IMR-90 (cell line): ENCODE measurements at regions of chr1 and their contacts with region 1.

Region 1: GRCh38 chr1:219973213-219973612 is 44.9 kb upstream of the SLC30A10 start:
- DNase-seq: no peak
- ATAC-seq: no peak
- H3K4me3 ChIP-seq: no peak overlapping the region
- H3K27ac ChIP-seq: no peak overlapping the region
- H3K4me1 ChIP-seq: no peaks in the 10 kb centered on the region
- H3K27me3 ChIP-seq: no peaks in the 10 kb centered on the region
- CTCF ChIP-seq: no peak
- POLR2A ChIP-seq: no peak
- RAD21 ChIP-seq: no peak

Region 2: GRCh38 chr1:219837274-219837993 is 135.8 kb before region 1 on chr1:
- CTCF ChIA-PET with region 1: no interaction called
- POLR2A ChIA-PET with region 1: no interaction called
- dilution Hi-C with region 1: no loop called
- in situ Hi-C with region 1: no loop called
- intact Hi-C with region 1: loop called (anchors 5 kb)
- DNase-seq: peak; percentile 54
- ATAC-seq: peak; percentile 72
- H3K4me3 ChIP-seq: no peak overlapping the region
- H3K27ac ChIP-seq: no peak overlapping the region
- H3K4me1 ChIP-seq: no peaks in the 10 kb centered on the region
- H3K27me3 ChIP-seq: peaks cover 2% of the 10 kb centered on the region; the same call in 1 of the 2 replicates
- CTCF ChIP-seq: peak; percentile 51
- POLR2A ChIP-seq: no peak
- RAD21 ChIP-seq: peak; percentile 52

Region 3: DNA sequence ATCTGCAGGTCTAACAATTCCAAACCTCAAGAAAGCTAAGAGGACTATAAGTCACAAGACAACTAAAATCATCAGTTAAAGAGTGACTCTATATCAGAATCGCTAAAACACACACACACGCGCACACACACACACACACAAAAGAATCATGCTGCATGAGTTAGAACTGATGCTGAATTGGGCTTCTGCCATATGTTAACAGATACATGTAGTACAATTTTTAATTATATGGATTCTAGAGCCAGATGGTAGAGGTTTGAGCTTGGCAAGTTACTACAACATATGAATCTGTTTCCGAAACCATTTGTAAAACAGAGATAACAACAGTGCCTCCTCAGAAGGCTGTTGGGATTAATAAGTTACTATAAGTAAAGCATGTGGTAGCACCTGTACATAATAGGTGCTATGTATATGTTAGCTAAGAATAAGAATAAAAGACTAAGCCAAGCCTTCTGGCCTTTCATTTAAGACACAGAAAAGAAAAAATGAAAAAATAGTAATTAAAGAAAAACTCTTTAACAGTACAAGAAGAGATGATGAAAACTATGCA is 55.2 kb after region 1 on chr1:
- CTCF ChIA-PET with region 1: no interaction called
- POLR2A ChIA-PET with region 1: no interaction called
- dilution Hi-C with region 1: no loop called
- in situ Hi-C with region 1: no loop called
- intact Hi-C with region 1: loop called (anchors 10 kb)
- DNase-seq: no peak
- ATAC-seq: no peak
- H3K4me3 ChIP-seq: no peak overlapping the region
- H3K27ac ChIP-seq: no peak overlapping the region
- H3K4me1 ChIP-seq: no peaks in the 10 kb centered on the region
- H3K27me3 ChIP-seq: no peaks in the 10 kb centered on the region
- CTCF ChIP-seq: no peak
- POLR2A ChIP-seq: no peak
- RAD21 ChIP-seq: no peak